ENCODE measurements at regions of chr3 and their contacts with region 1.

Region 1: GRCh38 chr3:179929091-179929529 is 107.6 kb downstream of the PEX5L start:
- DNase-seq: peak; percentile 73
- ATAC-seq: peak; percentile 44
- H3K4me3 Mint-ChIP-seq: no peak overlapping the region
- H3K27ac Mint-ChIP-seq: no peak overlapping the region
- H3K4me1 Mint-ChIP-seq: no peaks in the 10 kb centered on the region
- H3K27me3 Mint-ChIP-seq: peaks cover 3% of the 10 kb centered on the region

Region 2: GRCh38 chr3:180036671-180037455 is 107.8 kb after region 1 on chr3 and contains the start of gene PEX5L:
- CTCF ChIA-PET with region 1: no interaction called
- POLR2A ChIA-PET with region 1: no interaction called
- intact Hi-C with region 1: loop called in 1 of 2 experiments (anchors 5 kb)
- DNase-seq: peak; percentile 70
- ATAC-seq: peak; percentile 73
- H3K4me3 Mint-ChIP-seq: peak within 1 kb of the TSS; percentile 62
- H3K27ac Mint-ChIP-seq: no peak within 1 kb of the TSS
- H3K4me1 Mint-ChIP-seq: peaks cover 9% of the 10 kb centered on the region
- H3K27me3 Mint-ChIP-seq: peaks cover 38% of the 10 kb centered on the region
- total RNA-seq, gene PEX5L: 0.35 TPM in 1 of 2 experiments, not detected in the other

Region 3: DNA sequence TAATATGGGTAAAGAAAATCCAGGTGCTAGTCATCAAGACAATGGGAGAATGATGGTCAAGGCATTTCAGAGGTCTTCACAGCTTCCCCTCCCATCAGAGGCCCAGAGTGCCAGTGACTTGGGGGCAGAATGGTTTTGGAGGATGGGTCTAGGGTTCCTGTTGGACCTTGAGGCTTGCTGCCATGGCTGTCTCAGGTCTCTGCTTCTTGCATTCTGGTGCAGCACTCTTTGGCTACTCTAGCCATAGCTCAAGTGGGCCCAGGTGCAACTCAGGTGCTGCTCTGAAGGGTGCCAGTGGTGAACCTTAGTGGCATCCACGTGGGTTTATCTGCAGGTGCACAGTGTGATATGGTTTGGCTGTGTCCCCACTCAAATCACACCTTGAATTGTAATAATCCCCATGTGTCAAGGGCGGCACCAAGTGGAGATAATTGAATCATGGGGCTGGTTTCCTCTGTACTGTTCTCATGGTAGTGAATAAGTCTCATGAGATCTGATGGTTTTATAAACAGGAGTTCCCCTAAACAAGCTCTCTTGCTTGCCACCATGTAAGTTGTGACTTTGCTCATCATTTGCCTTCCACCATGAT is 156.1 kb after region 1 on chr3:
- CTCF ChIA-PET with region 1: no interaction called
- POLR2A ChIA-PET with region 1: no interaction called
- intact Hi-C with region 1: loop called in 1 of 2 experiments (anchors 2 kb)
- DNase-seq: no peak
- ATAC-seq: no peak
- H3K4me3 Mint-ChIP-seq: no peak overlapping the region
- H3K27ac Mint-ChIP-seq: no peak overlapping the region
- H3K4me1 Mint-ChIP-seq: no peaks in the 10 kb centered on the region
- H3K27me3 Mint-ChIP-seq: no peaks in the 10 kb centered on the region

Measured in activated CD4-positive, alpha-beta T cell treated with anti-CD3 and anti-CD28 coated beads for 36 hours (primary cell).